CD4-positive, alpha-beta memory T cell (primary cell): ENCODE measurements at regions of chr3 and their contacts with region 1.

Region 1: GRCh38 chr3:71444028-71444860 is 139.3 kb downstream of the FOXP1 start:
- DNase-seq: peak; percentile 89 to 95 (median 93)
- H3K4me3 ChIP-seq: peak overlapping the region; percentile 37 to 42
- H3K4me3 Mint-ChIP-seq: peak overlapping the region; percentile 27 to 92 (median 83)
- H3K27ac ChIP-seq: peak overlapping the region; percentile 67
- H3K27ac Mint-ChIP-seq: peak overlapping the region; percentile 96 to 100 (median 98)
- H3K4me1 ChIP-seq: peaks cover 100% of the 10 kb centered on the region
- H3K4me1 Mint-ChIP-seq: peaks cover 76 to 100% (median 91%) of the 10 kb centered on the region in 4 donors
- H3K27me3 ChIP-seq: no peaks in the 10 kb centered on the region
- H3K27me3 Mint-ChIP-seq: no peaks in the 10 kb centered on the region

Region 2: DNA sequence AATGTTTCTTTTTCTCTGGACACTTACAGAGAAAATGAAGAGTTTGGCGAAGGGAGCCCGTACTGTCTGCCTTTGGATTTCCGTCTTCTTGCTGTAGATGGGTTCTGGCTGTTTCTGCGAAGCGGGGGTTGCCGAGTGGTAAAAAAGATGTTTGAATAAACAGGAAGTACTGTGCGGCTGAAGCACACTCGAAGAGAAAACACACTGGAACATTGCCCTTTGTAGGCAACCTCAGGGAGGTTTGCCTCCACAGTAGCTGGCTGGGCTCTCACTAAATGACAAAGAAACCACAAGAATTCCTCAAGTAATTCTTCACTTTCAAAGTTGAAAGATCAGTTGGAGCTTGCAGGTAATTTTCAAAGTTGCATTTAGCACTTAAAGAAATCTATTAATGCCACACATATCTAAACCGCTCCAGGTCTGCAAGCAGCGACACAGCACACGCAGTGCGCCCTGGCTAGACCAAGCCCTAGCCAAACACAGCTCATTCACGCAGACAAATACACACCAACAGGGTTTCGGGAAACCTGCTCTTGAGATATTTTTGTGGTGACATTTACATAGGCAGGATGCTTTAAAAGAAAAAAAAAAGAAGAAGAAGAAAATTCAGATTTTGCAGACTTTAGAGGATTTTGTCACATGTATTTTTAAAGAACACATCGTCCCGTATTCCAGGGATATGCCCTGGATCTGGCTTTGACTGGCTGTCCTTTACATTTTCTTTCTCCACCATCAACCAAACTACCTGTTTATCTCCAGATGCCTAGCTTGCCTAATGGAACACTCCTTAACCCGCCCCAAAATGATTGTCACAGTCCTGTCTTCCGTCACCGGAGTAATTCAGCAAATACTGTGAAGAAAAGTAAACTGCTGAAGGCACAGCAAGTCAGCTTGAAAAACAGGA is 313.5 kb before region 1 on chr3:
- CTCF ChIA-PET with region 1: interaction called, 4 read pairs
- POLR2A ChIA-PET with region 1: interaction called, 9 read pairs
- intact Hi-C with region 1: loop called (anchors 5 kb)
- DNase-seq: peak; percentile 79 to 90 (median 85)
- H3K4me3 ChIP-seq: peak overlapping the region; percentile 59 to 90
- H3K4me3 Mint-ChIP-seq: peak overlapping the region; percentile 90 to 99 (median 94)
- H3K27ac ChIP-seq: peak overlapping the region; percentile 87
- H3K27ac Mint-ChIP-seq: peak overlapping the region; percentile 93 to 98 (median 97)
- H3K4me1 ChIP-seq: peaks cover 80% of the 10 kb centered on the region
- H3K4me1 Mint-ChIP-seq: peaks cover 39 to 90% (median 61%) of the 10 kb centered on the region in 4 donors
- H3K27me3 ChIP-seq: no peaks in the 10 kb centered on the region
- H3K27me3 Mint-ChIP-seq: no peaks in the 10 kb centered on the region

Region 3: DNA sequence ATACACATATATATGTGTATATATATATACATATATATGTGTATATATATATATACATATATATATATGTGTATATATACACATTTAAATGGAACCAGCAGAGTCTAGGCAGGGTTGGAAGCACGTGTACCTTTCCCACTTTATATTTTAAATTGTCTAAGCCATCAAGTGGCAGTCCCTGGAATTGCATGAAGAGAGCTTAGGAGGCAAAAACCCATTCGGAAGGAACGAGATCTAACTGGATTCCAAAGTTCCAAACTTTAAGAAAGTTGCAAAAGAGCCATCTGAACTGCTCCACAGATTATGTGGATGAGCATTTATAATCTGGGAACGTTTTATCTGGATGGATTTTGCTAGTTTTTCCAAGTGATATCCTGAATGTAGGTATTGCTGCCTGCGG is 47.2 kb before region 1 on chr3:
- CTCF ChIA-PET with region 1: interaction called, 5 read pairs
- POLR2A ChIA-PET with region 1: interaction called, 6 read pairs
- intact Hi-C with region 1: loop called (anchors 5 kb)
- DNase-seq: no peak
- H3K4me3 ChIP-seq: no peak overlapping the region
- H3K4me3 Mint-ChIP-seq: peak overlapping the region in 5 of 8 donors; percentile 20 to 84 (median 76)
- H3K27ac ChIP-seq: peak overlapping the region; percentile 15
- H3K27ac Mint-ChIP-seq: peak overlapping the region in 6 of 7 donors; percentile 73 to 92 (median 80)
- H3K4me1 ChIP-seq: peaks cover 66% of the 10 kb centered on the region
- H3K4me1 Mint-ChIP-seq: peaks cover 56 to 82% (median 69%) of the 10 kb centered on the region in 4 donors
- H3K27me3 ChIP-seq: no peaks in the 10 kb centered on the region
- H3K27me3 Mint-ChIP-seq: no peaks in the 10 kb centered on the region

Region 4: DNA sequence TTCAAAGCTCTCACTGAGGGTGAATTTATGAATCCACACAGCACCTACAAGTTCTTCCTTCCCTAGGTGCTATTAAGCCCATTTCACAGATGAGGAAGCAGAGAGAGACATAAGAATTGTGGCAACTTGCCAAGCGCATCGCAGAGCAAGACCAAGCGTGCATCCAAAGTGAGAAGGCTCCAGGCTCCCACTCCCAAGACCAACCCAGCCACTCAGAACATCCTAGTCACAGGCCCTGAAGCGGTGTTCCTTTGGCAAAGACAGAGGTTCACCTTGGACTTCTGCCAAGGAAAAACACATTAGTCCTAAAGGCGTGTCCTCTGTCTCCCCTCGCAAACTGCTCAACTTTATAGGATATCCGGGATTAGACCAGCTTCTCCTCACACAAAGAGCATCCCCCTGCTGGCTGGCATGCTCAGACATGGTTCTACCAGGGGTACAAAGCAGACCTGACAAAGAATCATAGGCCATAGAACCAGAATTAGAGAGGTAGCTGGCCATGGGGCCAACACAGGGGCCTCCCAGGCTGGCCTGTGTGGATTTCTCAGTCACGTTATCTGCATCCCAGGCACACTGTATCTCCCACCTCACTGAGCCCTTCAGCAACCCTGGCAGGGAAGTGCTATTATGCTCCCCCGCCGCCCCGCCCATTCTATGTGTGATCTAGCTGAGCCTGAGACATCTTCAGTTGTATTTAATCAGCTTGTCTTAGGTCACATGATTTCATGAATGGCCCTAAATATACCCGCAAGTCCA is 20.9 kb before region 1 on chr3:
- CTCF ChIA-PET with region 1: interaction called, 4 read pairs
- POLR2A ChIA-PET with region 1: interaction called, 46 read pairs
- intact Hi-C with region 1: loop called (anchors 2 kb)
- DNase-seq: no peak
- H3K4me3 ChIP-seq: no peak overlapping the region
- H3K4me3 Mint-ChIP-seq: peak overlapping the region in 5 of 8 donors; percentile 35 to 78 (median 60)
- H3K27ac ChIP-seq: no peak overlapping the region
- H3K27ac Mint-ChIP-seq: peak overlapping the region; percentile 84 to 97 (median 92)
- H3K4me1 ChIP-seq: peaks cover 78% of the 10 kb centered on the region
- H3K4me1 Mint-ChIP-seq: peaks cover 64 to 91% (median 77%) of the 10 kb centered on the region in 4 donors
- H3K27me3 ChIP-seq: no peaks in the 10 kb centered on the region
- H3K27me3 Mint-ChIP-seq: no peaks in the 10 kb centered on the region

Region 5: GRCh38 chr3:71487418-71487817 is 43.2 kb after region 1 on chr3:
- CTCF ChIA-PET with region 1: interaction called, 8 read pairs
- POLR2A ChIA-PET with region 1: interaction called, 85 read pairs
- intact Hi-C with region 1: no loop called
- DNase-seq: no peak
- H3K4me3 ChIP-seq: peak overlapping the region in 1 of 2 donors; percentile 34
- H3K4me3 Mint-ChIP-seq: peak overlapping the region; percentile 80 to 91 (median 86)
- H3K27ac ChIP-seq: peak overlapping the region; percentile 69
- H3K27ac Mint-ChIP-seq: peak overlapping the region; percentile 86 to 97 (median 96)
- H3K4me1 ChIP-seq: peaks cover 96% of the 10 kb centered on the region
- H3K4me1 Mint-ChIP-seq: peaks cover 51 to 92% (median 73%) of the 10 kb centered on the region in 4 donors
- H3K27me3 ChIP-seq: no peaks in the 10 kb centered on the region
- H3K27me3 Mint-ChIP-seq: no peaks in the 10 kb centered on the region